Spleen (tissue), 13 donors: ENCODE measurements at regions of chr4 and their contacts with region 1.

Region 1: GRCh38 chr4:127732613-127733328 is 2.6 kb downstream of the SLC25A31 start:
- DNase-seq: no peak
- H3K4me3 ChIP-seq: no peak overlapping the region
- H3K27ac ChIP-seq: no peak overlapping the region
- H3K4me1 ChIP-seq: no peaks in the 10 kb centered on the region
- H3K27me3 ChIP-seq: no peaks in the 10 kb centered on the region
- CTCF ChIP-seq: peak in 6 of 11 experiments; percentile 12 to 48 (median 26)
- POLR2A ChIP-seq: no peak

Region 2: GRCh38 chr4:127604949-127605709 is 127.6 kb before region 1 on chr4:
- intact Hi-C with region 1: loop called (anchors 5 kb)
- DNase-seq: no peak
- H3K4me3 ChIP-seq: no peak overlapping the region
- H3K27ac ChIP-seq: no peak overlapping the region
- H3K4me1 ChIP-seq: no peaks in the 10 kb centered on the region
- H3K27me3 ChIP-seq: peaks cover 0 to 13% (median 6%) of the 10 kb centered on the region in 7 donors
- CTCF ChIP-seq: peak in 6 of 11 experiments; percentile 22 to 54 (median 36)
- POLR2A ChIP-seq: no peak

Region 3: GRCh38 chr4:127782274-127783025 is 49.7 kb after region 1 on chr4 and contains the start of gene HSPA4L:
- intact Hi-C with region 1: no loop called
- DNase-seq: peak; percentile 82
- H3K4me3 ChIP-seq: peak within 1 kb of the TSS; percentile 39 to 77 (median 56)
- H3K27ac ChIP-seq: peak within 1 kb of the TSS in 7 of 8 donors; percentile 60 to 79 (median 72)
- H3K4me1 ChIP-seq: peaks cover 4 to 31% (median 23%) of the 10 kb centered on the region in 6 donors
- H3K27me3 ChIP-seq: peaks cover 0 to 61% (median 15%) of the 10 kb centered on the region in 7 donors
- CTCF ChIP-seq: peak in 5 of 11 experiments; percentile 26 to 40 (median 28)
- POLR2A ChIP-seq: peak in 1 of 3 donors; percentile 31
- total RNA-seq, gene HSPA4L: 0.83 to 4.1 (median 3.5) TPM